ENCODE measurements at regions of chr7 and their contacts with region 1.

Region 1: GRCh38 chr7:34759452-34760125 is 101.6 kb downstream of the NPSR1 start:
- DNase-seq: peak; percentile 61
- ATAC-seq: peak; percentile 39
- H3K4me3 ChIP-seq: peak overlapping the region; percentile 45 to 80 (median 47); a peak in 5 of 6 replicates
- H3K27ac ChIP-seq: peak overlapping the region; percentile 21
- H3K4me1 ChIP-seq: peaks cover 28% of the 10 kb centered on the region
- H3K27me3 ChIP-seq: no peaks in the 10 kb centered on the region
- CTCF ChIP-seq: peak; percentile 87
- EP300 ChIP-seq: no peak
- POLR2A ChIP-seq: no peak
- RAD21 ChIP-seq: peak; percentile 61

Region 2: GRCh38 chr7:34453150-34453549 is 306.4 kb before region 1 on chr7:
- CTCF ChIA-PET with region 1: no interaction called
- POLR2A ChIA-PET with region 1: no interaction called
- in situ Hi-C with region 1: no loop called
- intact Hi-C with region 1: no loop called
- DNase-seq: no peak
- ATAC-seq: no peak
- H3K4me3 ChIP-seq: no peak overlapping the region
- H3K27ac ChIP-seq: no peak overlapping the region
- H3K4me1 ChIP-seq: peaks cover 8% of the 10 kb centered on the region
- H3K27me3 ChIP-seq: no peaks in the 10 kb centered on the region
- CTCF ChIP-seq: no peak
- EP300 ChIP-seq: no peak
- POLR2A ChIP-seq: no peak
- RAD21 ChIP-seq: no peak

Region 3: GRCh38 chr7:34652809-34653208 is 106.8 kb before region 1 on chr7:
- CTCF ChIA-PET with region 1: no interaction called
- POLR2A ChIA-PET with region 1: interaction called, 12 read pairs
- in situ Hi-C with region 1: no loop called
- intact Hi-C with region 1: no loop called
- DNase-seq: peak; percentile 65
- ATAC-seq: peak; percentile 94
- H3K4me3 ChIP-seq: peak overlapping the region in 1 of 3 experiments; percentile 22; a peak in 2 of 6 replicates
- H3K27ac ChIP-seq: peak overlapping the region; percentile 65
- H3K4me1 ChIP-seq: peaks cover 44% of the 10 kb centered on the region
- H3K27me3 ChIP-seq: no peaks in the 10 kb centered on the region
- CTCF ChIP-seq: no peak
- EP300 ChIP-seq: peak in 1 of 2 experiments; percentile 15; a peak in 1 of 4 replicates
- POLR2A ChIP-seq: no peak
- RAD21 ChIP-seq: no peak

Region 4: DNA sequence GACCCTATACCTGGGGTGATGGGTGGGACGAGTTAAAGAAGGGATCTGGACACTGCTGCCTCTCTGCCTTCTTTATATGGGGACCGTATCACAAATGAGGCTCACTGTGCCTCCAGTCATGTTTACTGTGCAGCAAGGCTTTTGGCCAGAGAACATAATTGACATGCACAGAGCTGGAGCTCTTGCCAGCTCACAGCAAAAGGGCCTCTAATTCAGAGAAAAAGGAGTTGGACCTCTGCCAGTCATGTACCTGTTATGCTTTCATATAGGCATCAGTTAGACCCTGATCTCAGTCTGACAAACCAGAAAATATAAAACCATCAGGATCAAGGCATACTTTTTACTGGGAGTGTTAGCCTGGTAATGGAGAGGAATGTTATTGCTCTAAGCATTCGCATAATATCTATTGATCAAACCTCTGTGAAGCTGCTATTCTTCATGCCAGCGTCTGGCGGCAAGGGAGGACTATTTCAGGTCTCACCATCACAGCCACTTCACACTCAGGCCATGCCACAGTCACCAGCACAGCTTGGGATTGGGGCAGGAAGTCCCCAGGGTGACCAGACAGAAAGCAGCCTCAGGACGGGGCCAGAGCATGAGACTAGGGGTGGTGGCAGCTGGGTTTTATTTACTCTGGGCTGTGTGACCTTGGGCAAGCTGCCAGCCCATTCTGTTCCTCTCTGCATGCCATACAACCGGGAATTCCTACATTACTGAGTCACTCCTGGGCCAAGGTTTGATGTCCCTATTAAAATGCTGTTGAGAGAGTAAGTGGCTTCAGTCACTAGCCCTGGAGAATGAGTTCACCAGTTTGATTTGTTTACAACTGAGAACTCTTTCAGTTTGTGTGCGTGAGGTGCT is 11.5 kb before region 1 on chr7:
- CTCF ChIA-PET with region 1: no interaction called
- POLR2A ChIA-PET with region 1: interaction called, 72 read pairs
- in situ Hi-C with region 1: no loop called
- intact Hi-C with region 1: loop called (anchors 1 kb)
- DNase-seq: peak; percentile 99
- ATAC-seq: peak; percentile 95
- H3K4me3 ChIP-seq: peak overlapping the region in 2 of 3 experiments; percentile 18 to 42; a peak in 4 of 6 replicates
- H3K27ac ChIP-seq: peak overlapping the region; percentile 80
- H3K4me1 ChIP-seq: peaks cover 75% of the 10 kb centered on the region
- H3K27me3 ChIP-seq: no peaks in the 10 kb centered on the region
- CTCF ChIP-seq: 0 out of 2 replicates have a peak, but pooled peaks have one; percentile 17
- EP300 ChIP-seq: peak; percentile 66 to 82; a peak in 3 of 4 replicates
- POLR2A ChIP-seq: peak in 1 of 2 experiments; percentile 32; a peak in 1 of 4 replicates
- RAD21 ChIP-seq: peak; percentile 23; the same call in 1 of the 2 replicates

Region 5: GRCh38 chr7:34845666-34846361 is 86.2 kb after region 1 on chr7:
- CTCF ChIA-PET with region 1: no interaction called
- POLR2A ChIA-PET with region 1: no interaction called
- in situ Hi-C with region 1: no loop called
- intact Hi-C with region 1: loop called (anchors 1 kb)
- DNase-seq: peak; percentile 18
- ATAC-seq: peak; percentile 88
- H3K4me3 ChIP-seq: no peak overlapping the region
- H3K27ac ChIP-seq: no peak overlapping the region
- H3K4me1 ChIP-seq: peaks cover 7% of the 10 kb centered on the region; the same call in 1 of the 2 replicates
- H3K27me3 ChIP-seq: peaks cover 0 to 10% of the 10 kb centered on the region in 2 experiments; a peak in 1 of 5 replicates
- CTCF ChIP-seq: peak; percentile 35; the same call in 1 of the 2 replicates
- EP300 ChIP-seq: no peak
- POLR2A ChIP-seq: no peak
- RAD21 ChIP-seq: no peak

Region 6: DNA sequence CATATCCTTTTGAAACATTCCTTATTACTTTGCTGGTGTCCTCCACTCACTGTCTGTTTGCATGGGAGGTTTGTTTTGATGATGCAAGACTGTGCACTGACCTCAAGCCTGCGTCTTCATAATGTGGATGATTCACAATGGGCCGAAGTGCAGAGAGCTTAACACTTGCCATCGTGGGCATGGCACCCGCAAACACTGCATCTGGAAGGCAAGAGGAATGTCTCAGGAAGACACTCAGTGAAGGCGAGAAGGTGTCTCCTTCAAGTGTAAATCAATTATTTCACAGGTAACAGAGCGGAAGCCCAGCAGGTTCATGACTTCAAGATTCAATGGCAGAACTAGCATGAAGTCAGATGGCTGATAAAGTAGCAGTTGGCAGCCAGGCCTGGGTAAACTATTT is 179.6 kb after region 1 on chr7:
- CTCF ChIA-PET with region 1: no interaction called
- POLR2A ChIA-PET with region 1: interaction called, 12 read pairs
- in situ Hi-C with region 1: no loop called
- intact Hi-C with region 1: no loop called
- DNase-seq: peak; percentile 78
- ATAC-seq: peak; percentile 86
- H3K4me3 ChIP-seq: no peak overlapping the region
- H3K27ac ChIP-seq: peak overlapping the region; percentile 13
- H3K4me1 ChIP-seq: peaks cover 34% of the 10 kb centered on the region
- H3K27me3 ChIP-seq: no peaks in the 10 kb centered on the region
- CTCF ChIP-seq: no peak
- EP300 ChIP-seq: peak; percentile 38 to 76; a peak in 2 of 4 replicates
- POLR2A ChIP-seq: no peak
- RAD21 ChIP-seq: no peak

Region 7: DNA sequence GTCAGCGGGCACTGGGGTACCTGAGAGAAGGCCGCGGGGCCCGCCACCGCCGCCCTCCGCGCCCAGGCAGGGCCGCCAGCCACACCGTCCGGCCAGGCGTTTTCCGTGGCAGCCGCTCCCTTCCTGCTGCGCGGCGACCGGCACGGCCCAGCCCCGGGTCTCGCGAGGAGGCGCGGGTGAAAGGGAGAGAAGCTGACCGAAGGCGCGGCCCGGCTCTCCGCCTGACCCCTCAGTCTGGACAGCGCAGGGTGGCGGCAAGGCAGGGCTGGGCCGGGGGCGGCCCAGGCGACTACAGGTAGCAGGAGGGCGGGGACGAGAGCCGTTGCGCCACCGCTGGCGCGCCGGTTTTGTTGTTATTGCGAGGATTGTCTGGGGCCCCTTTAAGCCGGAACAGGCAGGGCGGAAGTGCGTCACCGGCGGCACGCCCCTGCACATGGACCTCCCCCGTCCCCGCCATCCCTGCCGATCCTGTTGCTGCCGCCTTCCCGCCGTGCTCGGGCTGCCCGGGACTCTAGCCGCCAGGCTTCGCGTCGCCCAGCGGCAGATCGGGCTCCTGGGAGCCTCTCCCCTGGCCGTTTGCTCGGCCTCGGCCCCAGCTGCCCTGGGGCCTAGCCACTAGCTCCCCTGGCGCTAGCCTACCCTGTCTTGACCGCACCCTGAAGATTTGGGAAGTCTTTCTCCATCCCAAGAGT is 935.3 kb after region 1 on chr7 and contains the start of gene HERPUD2:
- CTCF ChIA-PET with region 1: no interaction called
- POLR2A ChIA-PET with region 1: no interaction called
- in situ Hi-C with region 1: no loop called
- intact Hi-C with region 1: loop called (anchors 10 kb)
- DNase-seq: peak; percentile 88
- ATAC-seq: peak; percentile 95
- H3K4me3 ChIP-seq: peak within 1 kb of the TSS; percentile 78 to 97 (median 89)
- H3K27ac ChIP-seq: peak within 1 kb of the TSS; percentile 90
- H3K4me1 ChIP-seq: peaks cover 54% of the 10 kb centered on the region
- H3K27me3 ChIP-seq: no peaks in the 10 kb centered on the region; a peak in 1 of 5 replicates
- CTCF ChIP-seq: peak; percentile 32; the same call in 1 of the 2 replicates
- EP300 ChIP-seq: peak; percentile 14 to 24; a peak in 1 of 4 replicates
- POLR2A ChIP-seq: peak; percentile 74 to 89
- RAD21 ChIP-seq: no peak
- total RNA-seq, gene HERPUD2: 10.4 and 10.7 TPM in 2 replicates

Measured in HepG2 (cell line).